Activated naive CD4-positive, alpha-beta T cell treated with anti-CD3 and anti-CD28 coated beads, Interleukin-2, amount 10 ng/mL, durations not matched to agents 7 days and 5 days (primary cell): ENCODE measurements at regions of chr6 and their contacts with region 1.

Region 1: DNA sequence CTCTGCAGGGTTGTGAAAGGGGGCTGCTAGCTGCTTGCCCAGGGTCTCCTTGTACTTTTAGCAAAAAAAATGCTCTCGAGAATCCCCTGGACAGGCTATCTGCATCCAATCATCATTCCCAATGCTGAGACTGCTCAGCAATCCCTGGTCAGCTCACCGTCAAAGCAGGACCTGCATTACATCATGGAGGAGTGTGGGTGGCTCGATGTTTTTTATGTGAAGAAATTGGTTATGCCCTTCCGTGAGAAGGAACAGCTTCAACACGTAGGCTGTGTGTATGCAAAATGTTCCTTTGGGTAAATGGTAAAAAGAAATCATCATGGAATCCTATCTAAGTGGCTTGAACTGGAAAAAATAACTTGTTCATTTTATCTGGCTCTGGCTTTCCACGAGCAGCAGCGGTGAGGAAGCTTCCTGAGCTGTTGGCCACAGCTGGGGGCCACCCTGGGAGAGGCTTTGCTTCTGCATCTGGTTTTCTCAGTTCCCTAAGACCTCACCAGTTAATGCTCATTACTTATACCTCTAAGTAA is 111.4 kb downstream of the FYN start:
- DNase-seq: peak; percentile 43
- H3K4me3 Mint-ChIP-seq: peak overlapping the region; percentile 21
- H3K27ac Mint-ChIP-seq: peak overlapping the region; percentile 97
- H3K4me1 Mint-ChIP-seq: peaks cover 99% of the 10 kb centered on the region
- H3K27me3 Mint-ChIP-seq: no peaks in the 10 kb centered on the region

Region 2: GRCh38 chr6:111683749-111684267 is 78.0 kb before region 1 on chr6:
- CTCF ChIA-PET with region 1: no interaction called
- DNase-seq: no peak
- H3K4me3 Mint-ChIP-seq: no peak overlapping the region
- H3K27ac Mint-ChIP-seq: peak overlapping the region; percentile 74
- H3K4me1 Mint-ChIP-seq: peaks cover 23% of the 10 kb centered on the region
- H3K27me3 Mint-ChIP-seq: no peaks in the 10 kb centered on the region

Region 3: GRCh38 chr6:111721753-111722154 is 40.1 kb before region 1 on chr6:
- CTCF ChIA-PET with region 1: interaction called, 14 read pairs
- DNase-seq: peak; percentile 59
- H3K4me3 Mint-ChIP-seq: no peak overlapping the region
- H3K27ac Mint-ChIP-seq: no peak overlapping the region
- H3K4me1 Mint-ChIP-seq: peaks cover 63% of the 10 kb centered on the region
- H3K27me3 Mint-ChIP-seq: no peaks in the 10 kb centered on the region